ENCODE measurements at regions of chr5 and their contacts with region 1.

Region 1: DNA sequence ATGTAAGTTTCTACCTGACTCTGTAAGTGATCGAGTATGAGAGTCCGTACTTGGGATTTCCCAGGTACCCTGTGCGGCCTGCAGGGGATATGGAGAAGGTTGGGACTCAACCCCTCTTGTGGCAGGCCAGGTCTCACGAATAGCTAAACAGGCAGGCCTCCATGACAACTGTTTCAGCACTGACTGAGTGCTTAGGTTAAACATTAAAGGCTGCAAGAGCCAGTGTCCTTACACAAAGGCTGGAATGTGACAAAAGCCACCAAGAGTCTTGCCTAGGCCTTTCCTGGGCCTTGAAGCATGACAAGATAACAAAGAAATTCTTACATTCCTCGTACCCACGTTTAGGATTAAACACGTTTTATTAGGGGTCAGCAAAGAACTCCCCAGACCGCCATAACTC is 58.6 kb downstream of the THBS4 start:
- DNase-seq: peak in 1 of 2 donors; percentile 8
- H3K4me3 ChIP-seq: no peak overlapping the region
- H3K27ac ChIP-seq: peak overlapping the region in 1 of 3 donors; percentile 36
- H3K4me1 ChIP-seq: peaks cover 0 to 7% of the 10 kb centered on the region in 2 donors
- H3K27me3 ChIP-seq: no peaks in the 10 kb centered on the region
- CTCF ChIP-seq: peak in 1 of 6 experiments; percentile 3
- POLR2A ChIP-seq: no peak

Region 2: GRCh38 chr5:80308526-80308925 is 214.7 kb after region 1 on chr5:
- intact Hi-C with region 1: loop called (anchors 2 kb)
- DNase-seq: no peak
- H3K4me3 ChIP-seq: no peak overlapping the region
- H3K27ac ChIP-seq: no peak overlapping the region
- H3K4me1 ChIP-seq: no peaks in the 10 kb centered on the region
- H3K27me3 ChIP-seq: no peaks in the 10 kb centered on the region
- CTCF ChIP-seq: no peak
- POLR2A ChIP-seq: no peak

Measured in thyroid gland (tissue), 4 donors.